ENCODE measurements at regions of chr12 and their contacts with region 1.

Region 1: DNA sequence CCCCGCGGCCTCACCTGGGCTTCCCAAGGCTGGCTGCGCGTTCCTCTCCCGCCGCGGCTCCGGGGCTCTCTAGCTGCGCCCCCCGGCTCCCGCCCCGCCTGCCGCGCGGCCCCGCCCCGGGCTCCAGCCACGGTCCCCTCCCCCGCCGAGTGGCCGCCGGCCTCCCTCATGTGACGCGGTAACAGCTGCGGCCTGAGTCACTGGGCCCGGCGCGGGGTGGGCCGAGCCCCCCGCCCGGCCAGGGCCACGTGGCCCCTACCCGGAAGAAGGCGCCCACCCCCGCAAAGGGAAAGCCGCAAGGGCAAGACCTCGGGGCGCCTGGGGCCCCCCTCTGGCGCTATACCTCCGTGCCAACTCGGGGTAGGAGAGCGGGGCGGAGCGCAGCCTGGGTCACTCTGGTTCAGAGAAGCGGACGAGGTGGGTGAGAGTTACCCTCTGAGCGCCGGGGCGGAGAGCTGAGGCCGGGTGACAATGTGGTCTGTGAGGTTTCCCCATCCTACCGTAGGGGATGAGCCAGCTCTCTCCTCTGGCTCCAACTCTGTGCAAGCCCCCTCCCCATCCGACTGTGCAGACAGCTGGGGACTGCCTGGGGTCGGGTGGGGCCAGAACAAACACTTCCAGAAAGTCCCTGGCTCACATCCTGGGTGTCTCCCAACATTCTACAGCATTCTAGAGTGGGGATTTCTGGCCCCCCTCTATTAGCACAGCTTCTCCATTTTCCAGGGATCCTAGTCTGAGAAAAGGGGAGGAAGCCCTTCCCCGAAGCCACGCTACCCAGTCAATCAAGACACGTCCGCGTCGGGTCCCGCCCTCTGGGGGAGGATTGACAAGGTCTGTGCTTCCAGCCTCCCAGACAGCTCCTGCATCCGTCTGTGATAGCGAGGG is at the start of gene CD63:
- DNase-seq: peak; percentile 88 to 93
- ATAC-seq: peak; percentile 76 to 84
- H3K4me3 ChIP-seq: peak within 1 kb of the TSS; percentile 84 to 96 (median 92)
- H3K27ac ChIP-seq: peak within 1 kb of the TSS; percentile 99 to 100 (median 99)
- H3K4me1 ChIP-seq: peaks cover 24 to 36% of the 10 kb centered on the region in 2 donors
- H3K27me3 ChIP-seq: no peaks in the 10 kb centered on the region
- CTCF ChIP-seq: no peak
- POLR2A ChIP-seq: peak; percentile 93 to 95
- total RNA-seq, gene CD63: 423 to 1,107 (median 634) TPM

Region 2: GRCh38 chr12:53984901-53985709 is 1744.1 kb before region 1 on chr12 and contains the start of gene HOXC10:
- in situ Hi-C with region 1: loop called in 1 of 4 experiments (anchors 25 kb)
- intact Hi-C with region 1: loop called (anchors 10 kb)
- DNase-seq: peak; percentile 97
- ATAC-seq: peak; percentile 81 to 85
- H3K4me3 ChIP-seq: peak within 1 kb of the TSS; percentile 68 to 85 (median 82)
- H3K27ac ChIP-seq: peak within 1 kb of the TSS; percentile 94 to 100 (median 98)
- H3K4me1 ChIP-seq: peaks cover 32 to 41% of the 10 kb centered on the region in 2 donors
- H3K27me3 ChIP-seq: peaks cover 0 to 38% (median 0%) of the 10 kb centered on the region in 3 donors
- CTCF ChIP-seq: peak; percentile 64 to 92 (median 82)
- POLR2A ChIP-seq: peak; percentile 45 to 49
- total RNA-seq, gene HOXC10: 23.9 to 48.3 (median 40.3) TPM

Region 3: GRCh38 chr12:55659486-55660385 is 69.4 kb before region 1 on chr12:
- in situ Hi-C with region 1: no loop called
- intact Hi-C with region 1: loop called (anchors 5 kb)
- DNase-seq: peak; percentile 41 to 49
- ATAC-seq: peak; percentile 83 to 85
- H3K4me3 ChIP-seq: no peak overlapping the region
- H3K27ac ChIP-seq: peak overlapping the region; percentile 78 to 84 (median 82)
- H3K4me1 ChIP-seq: peaks cover 15 to 22% of the 10 kb centered on the region in 2 donors
- H3K27me3 ChIP-seq: no peaks in the 10 kb centered on the region
- CTCF ChIP-seq: peak in 2 of 5 experiments; percentile 27 to 47
- POLR2A ChIP-seq: no peak

Region 4: GRCh38 chr12:55681142-55682077 is 47.8 kb before region 1 on chr12:
- in situ Hi-C with region 1: loop called in 2 of 4 experiments (anchors 5 to 10 kb)
- intact Hi-C with region 1: no loop called
- DNase-seq: peak; percentile 63 to 85
- ATAC-seq: peak; percentile 93 to 94
- H3K4me3 ChIP-seq: peak overlapping the region; percentile 33 to 56 (median 40)
- H3K27ac ChIP-seq: peak overlapping the region; percentile 68 to 87 (median 80)
- H3K4me1 ChIP-seq: peaks cover 7 to 17% of the 10 kb centered on the region in 2 donors
- H3K27me3 ChIP-seq: no peaks in the 10 kb centered on the region
- CTCF ChIP-seq: peak; percentile 21 to 57 (median 53)
- POLR2A ChIP-seq: peak in 1 of 2 donors; percentile 39

Region 5: DNA sequence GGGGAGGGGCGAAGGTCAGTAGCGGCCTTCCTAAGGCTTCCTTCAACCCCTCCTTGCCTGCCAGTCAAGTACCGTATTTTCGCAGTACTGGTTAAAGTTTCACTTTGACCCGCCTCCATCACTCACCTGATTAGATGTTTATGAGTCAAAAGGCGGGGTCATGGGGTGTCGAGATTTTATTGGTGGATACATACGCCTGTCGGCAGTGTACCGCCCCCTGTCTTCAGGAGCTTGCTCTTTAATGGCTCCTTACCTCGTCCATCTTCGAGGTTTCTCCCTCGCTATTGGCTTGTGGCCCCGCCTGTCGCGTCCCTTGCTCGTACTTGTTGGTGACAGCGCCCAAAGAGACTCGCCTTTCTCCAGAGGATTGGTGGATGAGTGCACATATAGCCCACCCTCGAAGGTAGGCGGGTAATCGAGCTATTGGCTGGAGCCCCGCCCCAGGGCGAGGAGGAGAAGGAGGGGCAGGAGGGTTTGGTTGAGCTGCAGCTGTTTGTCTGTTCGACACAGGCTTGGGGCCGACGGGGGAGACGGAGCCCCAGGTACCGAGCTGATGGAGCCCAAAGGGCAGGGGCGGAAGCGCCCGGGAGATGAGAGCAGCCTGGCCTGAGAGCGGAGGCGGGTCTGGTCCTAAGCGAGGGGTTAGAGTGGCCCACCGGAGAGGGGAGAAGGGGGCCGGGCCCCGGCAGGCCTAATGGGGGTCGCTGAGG is 244.6 kb after region 1 on chr12 and contains the start of gene RAB5B:
- in situ Hi-C with region 1: no loop called
- intact Hi-C with region 1: loop called (anchors 1 kb)
- DNase-seq: peak; percentile 100
- ATAC-seq: peak; percentile 90 to 96
- H3K4me3 ChIP-seq: peak within 1 kb of the TSS; percentile 86 to 100 (median 98)
- H3K27ac ChIP-seq: peak within 1 kb of the TSS; percentile 95 to 100 (median 98)
- H3K4me1 ChIP-seq: peaks cover 28 to 36% of the 10 kb centered on the region in 2 donors
- H3K27me3 ChIP-seq: no peaks in the 10 kb centered on the region
- CTCF ChIP-seq: peak in 3 of 5 experiments; percentile 14 to 60 (median 37)
- POLR2A ChIP-seq: peak; percentile 97
- total RNA-seq, gene RAB5B: 75.5 to 84.9 (median 81.8) TPM

Region 6: GRCh38 chr12:56724972-56725722 is 996.0 kb after region 1 on chr12 and contains the start of gene NACA:
- in situ Hi-C with region 1: no loop called
- intact Hi-C with region 1: loop called (anchors 10 kb)
- DNase-seq: peak; percentile 99
- ATAC-seq: peak; percentile 85 to 87
- H3K4me3 ChIP-seq: peak within 1 kb of the TSS; percentile 78 to 99 (median 84)
- H3K27ac ChIP-seq: peak within 1 kb of the TSS; percentile 95 to 98 (median 96)
- H3K4me1 ChIP-seq: peaks cover 33 to 43% of the 10 kb centered on the region in 2 donors
- H3K27me3 ChIP-seq: no peaks in the 10 kb centered on the region
- CTCF ChIP-seq: no peak
- POLR2A ChIP-seq: peak; percentile 97 to 98
- total RNA-seq, gene NACA: 225 to 438 (median 398) TPM